CD8-positive, alpha-beta T cell (primary cell): ENCODE measurements at regions of chr2 and their contacts with region 1.

Region 1: DNA sequence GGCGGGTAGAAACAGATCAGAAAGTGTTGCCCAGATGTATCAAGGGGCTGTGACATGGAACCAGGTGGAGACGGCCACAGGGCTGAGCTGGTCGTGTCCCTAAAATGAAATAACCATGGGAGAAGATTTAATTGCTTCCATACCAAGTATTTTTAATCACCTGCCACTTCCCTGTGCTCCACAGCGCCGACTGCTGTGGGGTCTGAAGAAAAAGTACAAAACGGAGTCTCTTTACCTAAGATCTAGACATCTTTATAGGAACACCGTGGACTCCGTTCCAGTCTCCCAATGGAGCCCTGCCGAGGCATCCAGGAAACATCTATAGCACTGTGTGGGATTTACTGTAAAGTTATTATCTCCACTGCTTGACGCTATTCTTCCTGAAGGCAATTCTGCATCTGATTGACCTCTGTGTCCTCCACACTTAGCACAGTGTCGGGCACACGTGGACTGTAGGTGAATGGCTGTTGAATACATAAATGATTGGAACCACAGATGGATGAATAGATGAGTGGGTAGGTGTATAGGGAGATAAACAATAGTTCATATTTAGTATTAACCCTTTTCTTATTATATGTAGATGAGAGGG is 21.6 kb upstream of the GYPC start:
- DNase-seq: peak in 7 of 9 experiments; percentile 14 to 67 (median 41)
- ATAC-seq: peak; percentile 48
- H3K4me3 ChIP-seq: no peak overlapping the region
- H3K4me3 Mint-ChIP-seq: no peak overlapping the region
- H3K27ac ChIP-seq: no peak overlapping the region
- H3K27ac Mint-ChIP-seq: no peak overlapping the region
- H3K4me1 ChIP-seq: no peaks in the 10 kb centered on the region
- H3K4me1 Mint-ChIP-seq: peaks cover 5% of the 10 kb centered on the region
- H3K27me3 ChIP-seq: no peaks in the 10 kb centered on the region
- H3K27me3 Mint-ChIP-seq: no peaks in the 10 kb centered on the region
- CTCF ChIP-seq: peak; percentile 51

Region 2: GRCh38 chr2:126600742-126601141 is 33.6 kb before region 1 on chr2:
- CTCF ChIA-PET with region 1: no interaction called
- POLR2A ChIA-PET with region 1: no interaction called
- intact Hi-C with region 1: loop called in 1 of 2 experiments (anchors 2 kb)
- DNase-seq: no peak
- ATAC-seq: no peak
- H3K4me3 ChIP-seq: no peak overlapping the region
- H3K4me3 Mint-ChIP-seq: no peak overlapping the region
- H3K27ac ChIP-seq: no peak overlapping the region
- H3K27ac Mint-ChIP-seq: no peak overlapping the region
- H3K4me1 ChIP-seq: no peaks in the 10 kb centered on the region
- H3K4me1 Mint-ChIP-seq: no peaks in the 10 kb centered on the region
- H3K27me3 ChIP-seq: no peaks in the 10 kb centered on the region
- H3K27me3 Mint-ChIP-seq: no peaks in the 10 kb centered on the region
- CTCF ChIP-seq: no peak

Region 3: DNA sequence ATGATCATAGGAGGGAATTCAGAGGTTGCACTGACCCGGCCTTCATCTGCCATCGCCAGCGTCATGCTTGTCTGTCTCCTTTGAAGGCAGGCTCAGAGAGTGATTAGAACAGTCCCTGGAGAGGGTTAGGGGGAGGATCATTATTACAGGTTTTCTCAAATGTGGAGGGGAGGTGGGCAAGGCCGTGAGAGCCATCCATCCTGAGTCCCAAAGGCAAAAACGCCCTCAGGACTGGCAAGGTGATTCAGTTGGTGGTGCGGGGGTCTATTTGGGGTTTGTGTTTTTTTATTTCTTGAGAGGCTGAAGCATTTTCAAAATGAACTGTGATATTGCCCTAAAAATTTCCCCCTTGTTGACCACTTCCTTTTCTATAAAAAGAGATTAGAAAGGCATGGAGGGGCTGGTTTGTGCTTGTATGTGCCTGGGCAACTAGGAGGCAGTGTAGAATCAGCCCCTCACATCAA is 17.7 kb before region 1 on chr2:
- CTCF ChIA-PET with region 1: interaction called, 11 read pairs
- POLR2A ChIA-PET with region 1: no interaction called
- intact Hi-C with region 1: no loop called
- DNase-seq: no peak
- ATAC-seq: no peak
- H3K4me3 ChIP-seq: no peak overlapping the region
- H3K4me3 Mint-ChIP-seq: no peak overlapping the region
- H3K27ac ChIP-seq: no peak overlapping the region
- H3K27ac Mint-ChIP-seq: no peak overlapping the region
- H3K4me1 ChIP-seq: no peaks in the 10 kb centered on the region
- H3K4me1 Mint-ChIP-seq: no peaks in the 10 kb centered on the region
- H3K27me3 ChIP-seq: no peaks in the 10 kb centered on the region
- H3K27me3 Mint-ChIP-seq: peaks cover 4% of the 10 kb centered on the region
- CTCF ChIP-seq: no peak